HEK293 (cell line): ENCODE measurements at regions of chr15 and their contacts with region 1.

Region 1: GRCh38 chr15:41811432-41812195 is 16.3 kb upstream of the JMJD7 start:
- H3K4me3 ChIP-seq: no peak overlapping the region
- H3K27ac ChIP-seq: no peak overlapping the region
- H3K4me1 ChIP-seq: no peaks in the 10 kb centered on the region
- CTCF ChIP-seq: peak; percentile 56; the same call in 1 of the 2 replicates

Region 2: DNA sequence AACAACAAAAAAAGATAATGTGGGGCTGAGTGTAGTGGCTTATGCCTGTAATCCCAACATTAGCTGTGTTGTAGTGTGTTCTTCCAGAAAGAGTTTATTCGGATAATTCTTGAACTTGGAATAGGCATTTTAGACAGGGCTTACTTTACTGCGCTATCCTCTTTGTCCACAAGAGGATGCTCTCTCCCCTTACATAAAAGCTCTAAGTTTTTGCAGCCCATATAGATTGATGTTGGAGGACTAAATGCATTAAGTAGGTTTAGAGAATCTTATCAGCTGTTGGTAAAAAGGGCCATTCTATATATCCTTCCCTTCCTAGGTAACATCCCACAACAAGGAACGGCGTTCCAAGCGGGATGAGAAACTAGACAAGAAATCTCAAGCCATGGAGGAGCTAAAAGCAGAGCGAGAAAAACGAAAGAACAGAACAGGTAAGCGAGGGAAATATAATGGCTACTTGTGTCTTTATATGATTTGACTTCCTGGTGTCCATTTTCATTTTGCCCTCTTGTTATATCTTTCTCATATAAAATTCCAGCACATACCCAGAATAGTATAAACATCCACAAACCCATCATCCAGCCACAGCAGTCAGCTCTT is 345.7 kb before region 1 on chr15:
- CTCF ChIA-PET with region 1: interaction called, 17 read pairs
- POLR2A ChIA-PET with region 1: no interaction called
- H3K4me3 ChIP-seq: no peak overlapping the region
- H3K27ac ChIP-seq: no peak overlapping the region
- H3K4me1 ChIP-seq: no peaks in the 10 kb centered on the region
- CTCF ChIP-seq: peak; percentile 67; the same call in 1 of the 2 replicates

Region 3: DNA sequence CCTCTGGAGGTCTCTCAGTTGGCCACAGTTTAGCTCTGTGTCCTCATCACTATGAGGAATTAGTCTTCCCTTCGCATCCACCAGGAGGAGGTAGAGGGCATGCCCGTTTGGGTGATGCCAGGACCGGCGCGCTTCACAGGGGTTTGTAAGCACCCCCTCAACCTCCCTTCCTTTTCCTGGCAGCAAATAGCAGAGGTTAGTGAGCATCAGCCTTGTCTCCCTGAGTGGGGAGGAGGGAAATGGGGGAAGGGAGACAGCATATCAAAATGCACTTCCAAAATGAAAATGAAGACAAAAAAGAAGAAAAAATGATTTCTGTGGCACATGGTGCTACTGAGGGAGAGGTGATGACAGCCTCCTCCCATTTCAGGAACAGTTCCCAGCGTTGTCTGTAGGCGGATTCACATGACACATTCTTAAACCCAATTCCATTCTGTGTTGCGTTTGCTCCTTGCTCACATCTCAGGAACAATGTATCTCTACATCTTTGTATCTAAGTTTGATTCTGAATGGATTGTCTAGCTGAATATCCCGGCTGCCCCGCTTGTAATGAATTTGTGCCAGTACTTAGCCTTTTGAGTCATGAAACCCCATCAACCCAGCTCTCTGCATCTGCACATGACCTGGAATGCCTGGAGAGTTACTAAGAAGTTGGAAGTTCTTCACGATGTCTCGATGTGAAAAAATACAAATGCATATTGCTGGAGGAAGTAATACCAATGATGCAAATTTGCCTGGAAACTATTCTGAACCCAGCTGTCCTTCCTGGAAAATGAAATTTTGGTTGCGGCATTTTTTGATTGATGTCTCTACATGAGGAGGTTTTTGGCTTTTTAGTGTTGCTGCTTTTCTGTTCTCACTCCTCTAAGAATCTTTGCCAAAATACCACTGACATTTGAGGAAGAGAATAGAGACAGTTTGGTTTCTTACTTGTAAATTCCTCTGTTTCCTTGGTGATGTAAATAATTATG is 207.4 kb before region 1 on chr15:
- CTCF ChIA-PET with region 1: interaction called, 23 read pairs
- POLR2A ChIA-PET with region 1: interaction called, 8 read pairs
- H3K4me3 ChIP-seq: no peak overlapping the region
- H3K27ac ChIP-seq: no peak overlapping the region
- H3K4me1 ChIP-seq: no peaks in the 10 kb centered on the region
- CTCF ChIP-seq: peak; percentile 73; the same call in 1 of the 2 replicates

Region 4: GRCh38 chr15:41779662-41780157 is 31.9 kb before region 1 on chr15:
- CTCF ChIA-PET with region 1: interaction called, 100 read pairs
- POLR2A ChIA-PET with region 1: interaction called, 5 read pairs
- H3K4me3 ChIP-seq: no peak overlapping the region
- H3K27ac ChIP-seq: no peak overlapping the region
- H3K4me1 ChIP-seq: peaks cover 8% of the 10 kb centered on the region; the same call in 1 of the 2 replicates
- CTCF ChIP-seq: no peak

Region 5: DNA sequence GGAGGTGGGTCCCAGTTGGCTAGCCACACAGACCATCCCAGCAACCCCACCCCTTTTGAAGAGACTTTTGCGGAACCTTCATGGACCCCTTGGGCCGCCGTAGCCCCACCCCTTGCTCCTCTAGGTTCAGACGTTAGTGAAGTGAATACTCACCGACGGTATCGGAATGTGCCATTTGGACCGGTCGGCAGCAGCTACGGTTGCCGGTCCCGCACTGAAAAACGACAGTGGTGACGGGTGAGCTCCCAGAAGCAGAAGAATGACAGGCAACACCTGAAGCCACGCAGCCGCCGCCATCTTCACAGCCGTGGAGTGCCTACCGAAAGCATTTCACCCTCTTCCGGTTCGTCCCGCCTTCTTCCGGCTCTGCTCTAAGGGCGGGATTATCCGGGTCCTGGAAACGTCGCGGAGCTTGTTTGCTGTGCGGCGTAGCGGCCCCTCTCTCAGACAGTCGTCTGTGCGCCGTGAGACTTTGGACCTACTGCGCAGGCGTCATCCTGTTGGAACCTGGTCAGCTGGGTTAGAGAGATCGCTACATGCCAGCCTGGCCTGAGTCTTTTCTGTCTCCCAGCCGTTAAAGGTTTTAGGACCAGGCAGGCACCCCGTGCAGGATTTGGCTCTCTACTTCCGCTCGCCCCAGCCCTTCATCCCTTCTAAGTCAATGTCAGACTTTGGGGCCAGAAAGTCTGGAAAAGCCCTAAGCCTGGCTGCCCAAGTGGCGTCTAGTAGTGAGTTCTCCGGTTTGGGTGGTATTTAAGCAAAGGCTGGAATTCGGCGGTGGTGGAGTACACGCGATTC is 461.7 kb after region 1 on chr15 and contains the starts of genes GANC and TMEM87A:
- CTCF ChIA-PET with region 1: no interaction called
- POLR2A ChIA-PET with region 1: no interaction called
- H3K4me3 ChIP-seq: peak within 1 kb of the TSS; percentile 99
- H3K27ac ChIP-seq: peak within 1 kb of the TSS; percentile 81
- H3K4me1 ChIP-seq: no peaks in the 10 kb centered on the region
- CTCF ChIP-seq: no peak